Naive thymus-derived CD4-positive, alpha-beta T cell (primary cell): ENCODE measurements at regions of chr20 and their contacts with region 1.

Region 1: GRCh38 chr20:13261460-13262301 is 40.6 kb downstream of the ISM1 start:
- DNase-seq: peak; percentile 32 to 73 (median 62)
- ATAC-seq: peak; percentile 89
- H3K4me3 ChIP-seq: no peak overlapping the region
- H3K4me3 Mint-ChIP-seq: no peak overlapping the region
- H3K27ac ChIP-seq: no peak overlapping the region
- H3K27ac Mint-ChIP-seq: peak overlapping the region in 6 of 9 donors; percentile 21 to 51 (median 34)
- H3K4me1 ChIP-seq: peaks cover 0 to 6% of the 10 kb centered on the region in 2 donors
- H3K4me1 Mint-ChIP-seq: peaks cover 11 to 44% (median 27%) of the 10 kb centered on the region in 7 donors
- H3K27me3 ChIP-seq: no peaks in the 10 kb centered on the region
- H3K27me3 Mint-ChIP-seq: no peaks in the 10 kb centered on the region

Region 2: DNA sequence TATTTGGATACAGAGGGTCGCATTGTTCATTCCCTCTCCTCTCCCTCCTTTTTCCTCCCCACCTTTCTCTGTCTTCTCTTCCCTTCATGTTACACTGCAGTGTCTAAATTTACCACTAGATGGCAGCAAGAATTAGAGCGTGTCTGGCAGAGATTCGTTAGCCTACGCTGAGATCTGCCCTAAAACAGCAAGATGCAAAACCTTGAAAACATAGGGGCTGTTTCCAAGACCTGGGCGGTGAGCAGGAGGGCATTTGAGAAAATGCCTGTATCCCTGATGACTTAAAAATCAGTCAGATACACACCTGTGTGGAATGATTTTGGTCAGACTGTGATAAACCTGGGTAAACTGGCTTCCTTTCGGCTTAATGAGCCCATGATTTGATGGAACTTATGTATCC is 142.1 kb before region 1 on chr20:
- CTCF ChIA-PET with region 1: interaction called, 73 read pairs
- POLR2A ChIA-PET with region 1: interaction called, 3 read pairs
- intact Hi-C with region 1: loop called (anchors 1 kb)
- DNase-seq: peak in 8 of 9 donors; percentile 6 to 76 (median 66)
- ATAC-seq: peak; percentile 82
- H3K4me3 ChIP-seq: no peak overlapping the region
- H3K4me3 Mint-ChIP-seq: no peak overlapping the region
- H3K27ac ChIP-seq: no peak overlapping the region
- H3K27ac Mint-ChIP-seq: no peak overlapping the region
- H3K4me1 ChIP-seq: no peaks in the 10 kb centered on the region
- H3K4me1 Mint-ChIP-seq: no peaks in the 10 kb centered on the region
- H3K27me3 ChIP-seq: no peaks in the 10 kb centered on the region
- H3K27me3 Mint-ChIP-seq: no peaks in the 10 kb centered on the region

Region 3: GRCh38 chr20:13221673-13222318 is 39.9 kb before region 1 on chr20:
- CTCF ChIA-PET with region 1: interaction called, 22 read pairs
- POLR2A ChIA-PET with region 1: interaction called, 3 read pairs
- intact Hi-C with region 1: loop called (anchors 1 kb)
- DNase-seq: peak; percentile 59 to 78 (median 72)
- ATAC-seq: peak; percentile 89
- H3K4me3 ChIP-seq: peak overlapping the region; percentile 39
- H3K4me3 Mint-ChIP-seq: peak overlapping the region; percentile 77 to 89 (median 85)
- H3K27ac ChIP-seq: peak overlapping the region; percentile 42
- H3K27ac Mint-ChIP-seq: peak overlapping the region in 8 of 9 donors; percentile 47 to 89 (median 76)
- H3K4me1 ChIP-seq: peaks cover 5 to 18% of the 10 kb centered on the region in 2 donors
- H3K4me1 Mint-ChIP-seq: peaks cover 6 to 26% (median 13%) of the 10 kb centered on the region in 7 donors
- H3K27me3 ChIP-seq: peaks cover 8 to 18% of the 10 kb centered on the region in 2 donors
- H3K27me3 Mint-ChIP-seq: peaks cover 20 to 69% (median 29%) of the 10 kb centered on the region in 5 donors

Region 4: DNA sequence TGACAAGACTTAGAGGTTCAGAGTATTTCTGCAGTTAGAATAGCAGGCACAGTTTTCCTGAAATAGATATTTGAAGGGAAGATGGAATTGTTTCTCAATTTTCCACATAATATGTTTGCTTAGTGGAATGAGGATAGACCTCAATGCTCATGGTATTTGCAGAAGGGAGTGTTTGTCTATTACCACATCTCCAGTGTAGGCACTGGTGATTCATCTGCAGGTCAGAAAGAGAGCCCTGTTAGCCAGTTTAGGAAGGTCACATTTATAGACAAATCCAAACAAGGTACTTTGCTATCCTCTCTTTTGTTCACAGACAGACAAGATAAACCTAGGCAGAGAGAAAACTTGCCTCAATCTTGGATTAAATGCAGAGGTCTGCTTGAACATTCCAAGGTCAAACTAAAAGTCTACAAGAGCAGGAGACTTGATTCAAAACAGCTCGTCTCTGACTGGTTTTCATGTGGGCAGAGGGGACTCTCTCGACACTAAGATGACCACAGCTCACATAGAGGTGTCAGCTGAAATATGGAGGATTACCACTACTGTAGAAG is 17.8 kb before region 1 on chr20:
- CTCF ChIA-PET with region 1: interaction called, 8 read pairs
- POLR2A ChIA-PET with region 1: interaction called, 4 read pairs
- intact Hi-C with region 1: loop called (anchors 1 kb)
- DNase-seq: no peak
- ATAC-seq: no peak
- H3K4me3 ChIP-seq: no peak overlapping the region
- H3K4me3 Mint-ChIP-seq: no peak overlapping the region
- H3K27ac ChIP-seq: no peak overlapping the region
- H3K27ac Mint-ChIP-seq: peak overlapping the region in 1 of 9 donors; percentile 96
- H3K4me1 ChIP-seq: peaks cover 16 to 26% of the 10 kb centered on the region in 2 donors
- H3K4me1 Mint-ChIP-seq: peaks cover 23 to 42% (median 32%) of the 10 kb centered on the region in 7 donors
- H3K27me3 ChIP-seq: no peaks in the 10 kb centered on the region
- H3K27me3 Mint-ChIP-seq: no peaks in the 10 kb centered on the region

Region 5: DNA sequence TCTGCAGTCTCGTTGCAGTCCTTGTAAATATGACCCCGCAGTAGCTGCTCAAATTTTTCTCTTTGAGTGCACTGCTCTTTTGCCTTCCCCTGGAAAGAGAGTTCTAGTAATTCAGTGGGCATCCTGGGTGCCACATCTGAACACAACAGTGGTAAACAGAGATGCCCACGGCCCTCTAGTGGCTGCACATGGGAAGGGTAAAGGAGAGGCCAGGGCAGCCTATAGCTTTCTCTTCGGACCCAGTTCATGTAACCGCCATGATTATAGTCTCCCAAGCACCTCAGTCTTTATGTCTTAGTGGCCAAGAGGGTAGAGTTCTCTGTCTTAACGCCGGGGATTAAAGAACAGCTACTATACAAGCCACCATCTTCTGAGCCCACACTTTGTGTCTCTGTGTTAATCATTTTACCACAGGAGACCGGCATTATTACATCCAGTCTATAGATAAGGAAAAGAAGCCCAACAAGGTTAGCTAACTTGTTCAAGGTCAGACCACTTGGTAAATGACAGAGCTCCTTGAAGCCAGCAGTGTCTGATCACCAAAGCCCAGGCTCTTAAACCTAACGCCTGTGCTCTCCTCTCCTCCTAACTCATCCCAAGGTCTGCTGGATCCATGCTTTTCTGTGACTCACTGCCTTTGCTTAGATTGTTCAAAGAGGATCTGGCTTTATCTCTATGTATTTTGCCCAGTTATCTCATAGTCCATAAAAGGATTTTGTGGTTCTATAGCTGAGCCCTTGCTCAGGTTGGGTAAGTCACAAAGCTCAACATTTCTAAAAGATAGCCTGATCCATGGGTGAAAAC is 41.2 kb after region 1 on chr20:
- CTCF ChIA-PET with region 1: interaction called, 12 read pairs
- POLR2A ChIA-PET with region 1: no interaction called
- intact Hi-C with region 1: no loop called
- DNase-seq: peak in 8 of 9 donors; percentile 10 to 51 (median 40)
- ATAC-seq: peak; percentile 72
- H3K4me3 ChIP-seq: no peak overlapping the region
- H3K4me3 Mint-ChIP-seq: no peak overlapping the region
- H3K27ac ChIP-seq: no peak overlapping the region
- H3K27ac Mint-ChIP-seq: no peak overlapping the region
- H3K4me1 ChIP-seq: no peaks in the 10 kb centered on the region
- H3K4me1 Mint-ChIP-seq: no peaks in the 10 kb centered on the region
- H3K27me3 ChIP-seq: no peaks in the 10 kb centered on the region
- H3K27me3 Mint-ChIP-seq: peaks cover 0 to 4% (median 0%) of the 10 kb centered on the region in 5 donors